ENCODE measurements at regions of chr12 and their contacts with region 1.

Region 1: GRCh38 chr12:98532681-98533304 is 17.4 kb downstream of the TMPO start:
- DNase-seq: peak in 1 of 2 experiments; percentile 77
- H3K4me3 ChIP-seq: no peak overlapping the region
- H3K4me3 Mint-ChIP-seq: no peak overlapping the region
- H3K27ac Mint-ChIP-seq: peak overlapping the region; percentile 69
- H3K4me1 ChIP-seq: peaks cover 19% of the 10 kb centered on the region
- H3K4me1 Mint-ChIP-seq: peaks cover 4% of the 10 kb centered on the region
- H3K27me3 ChIP-seq: no peaks in the 10 kb centered on the region
- H3K27me3 Mint-ChIP-seq: no peaks in the 10 kb centered on the region
- CTCF ChIP-seq: peak; percentile 62 to 75

Region 2: DNA sequence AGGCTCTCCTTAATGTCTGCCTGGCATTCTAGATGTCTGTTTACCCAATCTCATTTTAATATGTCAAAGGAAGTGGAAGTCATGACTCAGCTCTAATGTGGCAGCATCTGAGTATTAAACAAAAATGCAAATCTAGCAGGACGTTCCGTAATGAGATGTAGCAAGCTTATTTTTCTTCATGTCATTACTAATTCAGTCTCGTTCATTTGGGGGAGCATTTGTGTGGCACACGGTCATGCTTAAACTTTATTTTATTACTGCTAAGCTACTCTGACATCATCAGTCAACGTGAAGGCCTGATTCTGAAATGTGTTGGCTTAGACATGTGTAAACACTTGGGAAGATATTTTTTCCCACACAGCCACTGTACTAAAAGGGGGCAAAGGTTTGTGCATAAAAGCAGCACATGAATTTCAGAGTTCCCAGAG is 344.1 kb before region 1 on chr12:
- CTCF ChIA-PET with region 1: no interaction called
- POLR2A ChIA-PET with region 1: no interaction called
- intact Hi-C with region 1: no loop called
- DNase-seq: no peak
- H3K4me3 ChIP-seq: no peak overlapping the region
- H3K4me3 Mint-ChIP-seq: no peak overlapping the region
- H3K27ac Mint-ChIP-seq: no peak overlapping the region
- H3K4me1 ChIP-seq: no peaks in the 10 kb centered on the region
- H3K4me1 Mint-ChIP-seq: peaks cover 7% of the 10 kb centered on the region
- H3K27me3 ChIP-seq: no peaks in the 10 kb centered on the region
- H3K27me3 Mint-ChIP-seq: no peaks in the 10 kb centered on the region
- CTCF ChIP-seq: no peak

Region 3: DNA sequence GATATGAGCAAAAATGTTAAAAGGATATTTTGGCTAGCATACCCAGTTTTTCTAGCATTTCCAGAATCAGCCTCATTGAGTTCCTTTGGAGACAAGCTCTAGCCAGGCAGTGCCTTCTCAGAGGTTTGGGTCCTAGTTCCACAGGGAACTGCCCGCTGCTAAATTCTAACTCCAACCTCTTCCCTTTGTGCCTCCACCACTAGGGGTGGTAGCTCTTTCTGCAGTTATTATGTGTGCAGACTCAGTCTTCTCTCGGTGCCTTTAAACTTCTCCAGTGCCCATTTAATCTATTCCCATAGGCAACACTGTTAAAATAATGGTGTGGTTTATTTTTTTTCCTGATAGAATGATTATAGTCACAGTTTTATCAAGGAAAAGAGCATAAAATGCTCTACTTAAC is 39.2 kb after region 1 on chr12:
- CTCF ChIA-PET with region 1: interaction called, 11 read pairs
- POLR2A ChIA-PET with region 1: no interaction called
- intact Hi-C with region 1: no loop called
- DNase-seq: no peak
- H3K4me3 ChIP-seq: no peak overlapping the region
- H3K4me3 Mint-ChIP-seq: no peak overlapping the region
- H3K27ac Mint-ChIP-seq: no peak overlapping the region
- H3K4me1 ChIP-seq: peaks cover 44% of the 10 kb centered on the region
- H3K4me1 Mint-ChIP-seq: no peaks in the 10 kb centered on the region
- H3K27me3 ChIP-seq: no peaks in the 10 kb centered on the region
- H3K27me3 Mint-ChIP-seq: no peaks in the 10 kb centered on the region
- CTCF ChIP-seq: peak; percentile 19 to 27